B cell (primary cell): ENCODE measurements at regions of chr10 and their contacts with region 1.

Region 1: DNA sequence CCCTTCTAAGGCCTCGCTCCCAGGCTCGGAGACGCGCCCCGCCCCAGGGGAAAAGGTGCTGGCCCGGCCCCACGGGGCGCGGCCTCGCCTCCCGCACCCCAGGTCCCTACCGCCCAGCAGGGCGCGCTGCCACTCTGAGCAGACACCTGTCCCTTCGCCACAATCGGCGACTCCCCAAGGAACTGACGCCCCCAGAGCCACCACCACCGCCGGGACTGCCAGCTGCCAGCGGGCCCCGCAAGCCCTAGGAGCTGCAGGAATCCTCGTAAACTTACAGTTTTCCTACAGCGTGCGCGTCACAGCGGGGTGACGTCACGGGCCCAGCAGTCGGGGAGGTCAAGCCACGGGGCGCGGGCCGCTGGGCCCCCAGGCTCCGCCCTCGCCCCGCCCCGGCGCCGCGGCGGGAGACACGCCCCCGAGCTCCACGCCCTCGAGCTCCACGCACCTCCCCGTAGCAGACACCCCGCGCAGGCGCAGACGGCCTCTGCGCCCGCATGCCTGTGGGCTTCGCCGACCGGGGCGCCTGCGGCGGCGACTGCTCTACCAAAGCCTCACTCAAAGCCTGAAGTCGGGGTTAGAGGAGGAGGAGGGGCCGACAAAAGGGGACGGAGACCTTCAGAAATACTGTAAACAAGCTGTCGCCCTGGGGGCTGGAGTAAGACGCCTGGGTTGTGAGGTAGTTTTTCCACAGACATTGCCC is at the start of gene ZNF438:
- DNase-seq: peak; percentile 98
- ATAC-seq: peak; percentile 84
- H3K4me3 ChIP-seq: peak within 1 kb of the TSS; percentile 61 to 88 (median 76)
- H3K4me3 Mint-ChIP-seq: peak within 1 kb of the TSS; percentile 94
- H3K27ac ChIP-seq: peak within 1 kb of the TSS; percentile 99
- H3K27ac Mint-ChIP-seq: peak within 1 kb of the TSS; percentile 99
- H3K4me1 ChIP-seq: peaks cover 7 to 16% of the 10 kb centered on the region in 2 donors
- H3K4me1 Mint-ChIP-seq: peaks cover 9% of the 10 kb centered on the region
- H3K27me3 ChIP-seq: no peaks in the 10 kb centered on the region
- H3K27me3 Mint-ChIP-seq: no peaks in the 10 kb centered on the region
- CTCF ChIP-seq: peak; percentile 82
- total RNA-seq, gene ZNF438: 3.7 and 3.9 TPM in 2 replicates

Region 2: GRCh38 chr10:30701451-30702173 is 330.1 kb before region 1 on chr10:
- CTCF ChIA-PET with region 1: interaction called, 3 read pairs
- POLR2A ChIA-PET with region 1: no interaction called
- intact Hi-C with region 1: loop called (anchors 10 kb)
- DNase-seq: peak; percentile 57
- ATAC-seq: peak; percentile 52
- H3K4me3 ChIP-seq: peak overlapping the region in 4 of 5 experiments; percentile 1 to 44 (median 26)
- H3K4me3 Mint-ChIP-seq: peak overlapping the region; percentile 89
- H3K27ac ChIP-seq: peak overlapping the region; percentile 66 to 76
- H3K27ac Mint-ChIP-seq: peak overlapping the region; percentile 96
- H3K4me1 ChIP-seq: peaks cover 49% of the 10 kb centered on the region in 2 donors
- H3K4me1 Mint-ChIP-seq: peaks cover 59% of the 10 kb centered on the region
- H3K27me3 ChIP-seq: no peaks in the 10 kb centered on the region
- H3K27me3 Mint-ChIP-seq: no peaks in the 10 kb centered on the region
- CTCF ChIP-seq: no peak

Region 3: DNA sequence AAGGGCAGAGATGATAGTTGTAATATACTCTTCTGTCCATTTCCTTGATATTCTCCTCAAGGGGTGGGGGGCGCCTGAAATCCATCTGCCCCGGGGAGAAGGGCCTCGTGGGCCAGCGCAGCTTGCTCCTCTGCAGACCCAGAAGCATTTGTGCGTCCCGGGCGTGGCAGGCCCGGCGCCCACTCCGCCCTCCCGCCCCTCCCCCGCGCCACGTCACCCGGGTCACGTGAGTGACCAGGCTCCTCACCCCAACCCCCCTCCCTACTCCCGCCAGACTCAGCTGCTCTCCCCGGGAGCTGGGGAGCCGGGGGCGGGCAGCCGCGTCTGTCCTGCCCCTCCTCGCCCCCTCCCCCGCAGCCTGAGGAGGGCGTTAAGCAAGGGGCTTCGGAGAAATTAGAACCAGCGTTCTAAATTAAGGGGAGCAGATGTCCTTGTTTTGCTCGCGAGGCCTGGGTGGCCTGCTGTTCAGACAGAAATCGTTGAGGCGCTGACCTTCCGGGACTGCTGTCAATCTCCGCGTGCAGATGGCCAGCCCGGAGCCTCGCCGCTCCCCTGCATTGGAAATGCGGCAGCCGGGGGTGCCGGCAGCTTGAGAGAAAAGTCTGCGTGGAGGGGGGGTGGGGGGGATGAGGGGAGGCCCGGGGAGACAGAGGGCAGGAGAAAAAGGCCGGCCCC is 102.1 kb after region 1 on chr10:
- CTCF ChIA-PET with region 1: interaction called, 3 read pairs
- POLR2A ChIA-PET with region 1: interaction called, 5 read pairs
- intact Hi-C with region 1: loop called (anchors 1 kb)
- DNase-seq: peak; percentile 84
- ATAC-seq: peak; percentile 79
- H3K4me3 ChIP-seq: peak overlapping the region; percentile 24 to 91 (median 75)
- H3K4me3 Mint-ChIP-seq: peak overlapping the region; percentile 88
- H3K27ac ChIP-seq: peak overlapping the region; percentile 26 to 64
- H3K27ac Mint-ChIP-seq: peak overlapping the region; percentile 63
- H3K4me1 ChIP-seq: peaks cover 8 to 13% of the 10 kb centered on the region in 2 donors
- H3K4me1 Mint-ChIP-seq: peaks cover 24% of the 10 kb centered on the region
- H3K27me3 ChIP-seq: no peaks in the 10 kb centered on the region
- H3K27me3 Mint-ChIP-seq: no peaks in the 10 kb centered on the region
- CTCF ChIP-seq: no peak

Region 4: GRCh38 chr10:31759799-31760626 is 728.3 kb after region 1 on chr10:
- CTCF ChIA-PET with region 1: interaction called, 3 read pairs
- POLR2A ChIA-PET with region 1: no interaction called
- intact Hi-C with region 1: loop called (anchors 1 kb)
- DNase-seq: peak; percentile 96
- ATAC-seq: peak; percentile 93
- H3K4me3 ChIP-seq: peak overlapping the region; percentile 71 to 98 (median 94)
- H3K4me3 Mint-ChIP-seq: peak overlapping the region; percentile 92
- H3K27ac ChIP-seq: peak overlapping the region; percentile 85 to 86
- H3K27ac Mint-ChIP-seq: peak overlapping the region; percentile 97
- H3K4me1 ChIP-seq: peaks cover 5 to 14% of the 10 kb centered on the region in 2 donors
- H3K4me1 Mint-ChIP-seq: peaks cover 15% of the 10 kb centered on the region
- H3K27me3 ChIP-seq: no peaks in the 10 kb centered on the region
- H3K27me3 Mint-ChIP-seq: no peaks in the 10 kb centered on the region
- CTCF ChIP-seq: no peak

Region 5: GRCh38 chr10:32378363-32379317 is 1346.9 kb after region 1 on chr10:
- CTCF ChIA-PET with region 1: no interaction called
- POLR2A ChIA-PET with region 1: no interaction called
- intact Hi-C with region 1: loop called (anchors 5 kb)
- DNase-seq: peak; percentile 90
- ATAC-seq: peak; percentile 95
- H3K4me3 ChIP-seq: peak overlapping the region; percentile 63 to 99 (median 83)
- H3K4me3 Mint-ChIP-seq: no peak overlapping the region
- H3K27ac ChIP-seq: peak overlapping the region; percentile 73 to 85
- H3K27ac Mint-ChIP-seq: no peak overlapping the region
- H3K4me1 ChIP-seq: peaks cover 10 to 23% of the 10 kb centered on the region in 2 donors
- H3K4me1 Mint-ChIP-seq: peaks cover 20% of the 10 kb centered on the region
- H3K27me3 ChIP-seq: no peaks in the 10 kb centered on the region
- H3K27me3 Mint-ChIP-seq: no peaks in the 10 kb centered on the region
- CTCF ChIP-seq: no peak